Activated naive CD4-positive, alpha-beta T cell treated with anti-CD3 and anti-CD28 coated beads for 36 hours (primary cell): ENCODE measurements at regions of chr13 and their contacts with region 1.

Region 1: DNA sequence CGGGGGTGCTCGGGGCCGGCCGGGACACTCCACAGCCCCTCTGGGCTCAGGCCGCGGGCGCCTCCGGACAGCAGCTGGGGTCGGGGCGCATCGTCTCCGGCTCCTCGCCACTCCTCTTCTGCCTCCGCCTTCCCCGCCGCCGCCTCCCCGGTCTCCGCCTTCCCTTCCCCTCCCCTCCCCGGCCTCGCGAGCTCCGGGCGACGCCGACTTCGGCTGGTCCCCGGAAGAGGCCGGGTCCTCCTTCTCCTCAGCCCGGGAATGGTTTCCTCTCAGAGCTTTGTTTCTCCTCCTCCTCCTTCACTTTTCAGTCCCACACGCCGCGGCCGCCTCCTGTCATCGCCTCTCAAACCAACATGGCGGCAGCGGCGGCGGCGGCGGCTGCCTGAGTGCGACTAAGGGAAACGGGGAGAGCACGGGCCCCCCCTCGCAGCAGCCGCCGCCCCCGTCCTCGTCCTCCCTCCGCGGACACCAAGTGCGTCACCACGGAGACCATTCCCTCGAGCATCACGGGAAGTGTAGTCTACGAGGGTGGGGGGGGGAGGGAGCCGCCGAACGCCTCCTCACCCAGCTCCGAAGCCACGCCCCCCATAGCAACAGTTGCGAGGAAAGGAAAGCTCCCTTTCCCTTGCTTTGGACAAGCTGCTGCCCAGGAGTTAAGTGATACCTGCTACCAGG is at the start of gene UBL3:
- DNase-seq: peak; percentile 96
- H3K4me3 Mint-ChIP-seq: peak within 1 kb of the TSS; percentile 83
- H3K27ac Mint-ChIP-seq: peak within 1 kb of the TSS; percentile 97
- H3K4me1 Mint-ChIP-seq: peaks cover 28% of the 10 kb centered on the region
- H3K27me3 Mint-ChIP-seq: no peaks in the 10 kb centered on the region
- total RNA-seq, gene UBL3: 8.3 to 8.5 TPM

Region 2: GRCh38 chr13:29465741-29466293 is 384.5 kb before region 1 on chr13:
- CTCF ChIA-PET with region 1: no interaction called
- intact Hi-C with region 1: no loop called
- DNase-seq: no peak
- H3K4me3 Mint-ChIP-seq: no peak overlapping the region
- H3K27ac Mint-ChIP-seq: no peak overlapping the region
- H3K4me1 Mint-ChIP-seq: no peaks in the 10 kb centered on the region
- H3K27me3 Mint-ChIP-seq: no peaks in the 10 kb centered on the region

Region 3: DNA sequence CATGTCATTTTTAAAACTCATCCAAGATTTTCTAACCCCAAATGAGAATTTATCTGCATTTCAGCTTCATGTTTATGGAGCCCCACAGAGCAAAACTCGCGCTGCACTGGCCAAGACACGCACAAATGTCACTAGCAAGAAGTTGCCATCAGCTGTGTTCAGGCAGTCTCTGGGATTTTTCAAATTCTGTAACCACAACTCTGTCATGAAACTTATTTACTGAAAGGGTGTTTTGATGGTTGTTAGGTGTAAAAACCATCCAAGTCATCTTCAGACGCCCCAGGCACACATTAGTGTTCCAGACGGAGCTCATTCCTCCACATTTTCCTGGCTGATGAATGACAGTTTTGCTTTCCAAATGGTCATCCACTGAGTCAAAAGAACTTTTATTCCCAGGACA is 318.2 kb before region 1 on chr13:
- CTCF ChIA-PET with region 1: no interaction called
- intact Hi-C with region 1: loop called (anchors 10 kb)
- DNase-seq: no peak
- H3K4me3 Mint-ChIP-seq: no peak overlapping the region
- H3K27ac Mint-ChIP-seq: peak overlapping the region; percentile 50
- H3K4me1 Mint-ChIP-seq: no peaks in the 10 kb centered on the region
- H3K27me3 Mint-ChIP-seq: no peaks in the 10 kb centered on the region

Region 4: GRCh38 chr13:29782798-29783197 is 67.6 kb before region 1 on chr13:
- CTCF ChIA-PET with region 1: interaction called, 3 read pairs
- intact Hi-C with region 1: loop called (anchors 2 kb)
- DNase-seq: peak; percentile 39
- H3K4me3 Mint-ChIP-seq: no peak overlapping the region
- H3K27ac Mint-ChIP-seq: no peak overlapping the region
- H3K4me1 Mint-ChIP-seq: peaks cover 16% of the 10 kb centered on the region
- H3K27me3 Mint-ChIP-seq: no peaks in the 10 kb centered on the region

Region 5: GRCh38 chr13:29835280-29836061 is 14.9 kb before region 1 on chr13:
- CTCF ChIA-PET with region 1: interaction called, 4 read pairs
- intact Hi-C with region 1: loop called (anchors 1 kb)
- DNase-seq: no peak
- H3K4me3 Mint-ChIP-seq: no peak overlapping the region
- H3K27ac Mint-ChIP-seq: no peak overlapping the region
- H3K4me1 Mint-ChIP-seq: peaks cover 55% of the 10 kb centered on the region
- H3K27me3 Mint-ChIP-seq: no peaks in the 10 kb centered on the region

Region 6: DNA sequence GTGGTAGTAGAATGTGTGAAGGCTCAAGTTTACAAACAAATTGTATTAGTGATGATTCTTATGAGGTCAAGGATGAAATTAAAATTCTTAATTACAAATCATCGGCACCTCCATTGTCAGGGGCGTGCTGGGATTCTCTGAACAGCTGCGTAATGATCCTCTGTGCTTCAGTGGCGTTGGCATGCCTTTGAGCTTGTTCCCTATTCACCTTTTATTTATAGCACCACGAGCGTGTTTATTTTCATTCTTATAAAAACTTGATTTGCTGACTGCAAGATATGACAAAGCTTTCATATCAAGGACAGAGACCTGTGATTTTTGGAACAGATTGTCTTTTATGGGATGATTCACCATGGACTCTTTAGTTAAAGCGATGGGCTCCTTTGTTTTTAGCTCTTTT is 18.2 kb after region 1 on chr13:
- CTCF ChIA-PET with region 1: no interaction called
- intact Hi-C with region 1: no loop called
- DNase-seq: no peak
- H3K4me3 Mint-ChIP-seq: no peak overlapping the region
- H3K27ac Mint-ChIP-seq: no peak overlapping the region
- H3K4me1 Mint-ChIP-seq: no peaks in the 10 kb centered on the region
- H3K27me3 Mint-ChIP-seq: no peaks in the 10 kb centered on the region

Region 7: DNA sequence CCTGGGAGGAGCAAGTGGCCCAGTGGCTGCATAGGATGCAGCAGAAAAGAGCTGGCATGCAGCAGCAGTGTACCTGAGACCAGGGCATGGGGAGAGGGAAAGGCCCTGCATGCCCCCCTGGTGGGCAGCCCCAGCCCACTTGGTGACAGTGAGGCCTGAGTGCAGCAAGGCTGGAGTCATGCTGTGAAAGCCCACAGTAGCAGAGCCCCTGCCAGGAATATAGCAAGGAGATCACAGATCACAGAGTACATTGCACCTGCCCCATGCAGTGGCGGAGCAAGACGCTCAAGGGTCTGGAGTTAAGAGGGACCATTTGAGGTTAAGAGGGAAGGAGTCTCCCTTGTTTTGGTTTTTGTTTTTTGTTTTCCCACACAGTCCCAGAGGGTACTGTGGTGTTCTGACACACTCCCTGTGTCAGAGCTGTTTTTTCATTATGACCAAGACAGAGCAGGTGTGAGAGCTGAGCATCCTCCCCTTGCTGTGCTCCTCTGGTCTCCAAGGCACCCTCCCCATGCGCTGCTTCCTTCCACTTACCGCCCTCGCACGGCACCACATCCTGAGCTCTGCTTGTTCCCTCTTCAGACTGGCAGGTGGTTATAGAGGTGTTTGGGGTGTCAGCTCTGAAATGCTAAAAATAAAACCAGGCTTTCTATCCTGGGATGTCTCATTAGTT is 85.1 kb after region 1 on chr13:
- CTCF ChIA-PET with region 1: interaction called, 10 read pairs
- intact Hi-C with region 1: loop called (anchors 1 kb)
- DNase-seq: peak; percentile 94
- H3K4me3 Mint-ChIP-seq: peak overlapping the region; percentile 67
- H3K27ac Mint-ChIP-seq: peak overlapping the region; percentile 83
- H3K4me1 Mint-ChIP-seq: peaks cover 39% of the 10 kb centered on the region
- H3K27me3 Mint-ChIP-seq: no peaks in the 10 kb centered on the region

Region 8: GRCh38 chr13:29961036-29961670 is 110.8 kb after region 1 on chr13:
- CTCF ChIA-PET with region 1: no interaction called
- intact Hi-C with region 1: no loop called
- DNase-seq: no peak
- H3K4me3 Mint-ChIP-seq: no peak overlapping the region
- H3K27ac Mint-ChIP-seq: no peak overlapping the region
- H3K4me1 Mint-ChIP-seq: peaks cover 7% of the 10 kb centered on the region
- H3K27me3 Mint-ChIP-seq: no peaks in the 10 kb centered on the region

Region 9: GRCh38 chr13:30371649-30372265 is 521.4 kb after region 1 on chr13:
- CTCF ChIA-PET with region 1: no interaction called
- intact Hi-C with region 1: loop called (anchors 2 kb)
- DNase-seq: peak; percentile 87
- H3K4me3 Mint-ChIP-seq: peak overlapping the region; percentile 58
- H3K27ac Mint-ChIP-seq: peak overlapping the region; percentile 87
- H3K4me1 Mint-ChIP-seq: peaks cover 75% of the 10 kb centered on the region
- H3K27me3 Mint-ChIP-seq: no peaks in the 10 kb centered on the region